ENCODE measurements at regions of chr3 and their contacts with region 1.

Region 1: DNA sequence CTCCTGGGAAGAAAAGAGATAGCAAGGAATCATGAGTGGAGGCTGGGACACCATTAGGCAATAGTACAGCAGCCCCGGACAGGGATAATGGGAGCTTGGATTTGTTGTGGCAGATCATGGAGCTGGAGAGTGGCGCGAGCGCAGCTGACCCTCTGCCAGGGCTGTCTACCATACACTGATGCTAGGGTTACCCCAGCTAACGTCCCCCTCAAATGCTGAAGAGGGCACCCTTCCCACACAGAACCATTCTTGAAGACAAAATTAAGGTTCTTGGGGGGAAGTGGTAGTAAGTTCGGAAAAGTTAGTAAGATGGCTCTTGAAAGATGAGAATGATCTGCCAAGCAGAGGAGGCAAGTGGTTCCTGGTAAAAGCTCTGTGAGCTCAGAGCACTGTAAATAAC is 61.1 kb downstream of the ST3GAL6 start:
- DNase-seq: no peak
- ATAC-seq: peak in 1 of 8 donors; percentile 45
- H3K4me3 ChIP-seq: no peak overlapping the region
- H3K27ac ChIP-seq: no peak overlapping the region
- H3K4me1 ChIP-seq: peaks cover 0 to 25% (median 0%) of the 10 kb centered on the region in 9 donors
- H3K27me3 ChIP-seq: no peaks in the 10 kb centered on the region
- CTCF ChIP-seq: peak in 2 of 9 donors; percentile 8 to 10

Region 2: GRCh38 chr3:98333989-98334606 is 490.2 kb before region 1 on chr3:
- intact Hi-C with region 1: no loop called
- DNase-seq: no peak
- ATAC-seq: no peak
- H3K4me3 ChIP-seq: no peak overlapping the region
- H3K27ac ChIP-seq: no peak overlapping the region
- H3K4me1 ChIP-seq: no peaks in the 10 kb centered on the region
- H3K27me3 ChIP-seq: peaks cover 0 to 17% (median 3%) of the 10 kb centered on the region in 7 donors
- CTCF ChIP-seq: no peak

Region 3: DNA sequence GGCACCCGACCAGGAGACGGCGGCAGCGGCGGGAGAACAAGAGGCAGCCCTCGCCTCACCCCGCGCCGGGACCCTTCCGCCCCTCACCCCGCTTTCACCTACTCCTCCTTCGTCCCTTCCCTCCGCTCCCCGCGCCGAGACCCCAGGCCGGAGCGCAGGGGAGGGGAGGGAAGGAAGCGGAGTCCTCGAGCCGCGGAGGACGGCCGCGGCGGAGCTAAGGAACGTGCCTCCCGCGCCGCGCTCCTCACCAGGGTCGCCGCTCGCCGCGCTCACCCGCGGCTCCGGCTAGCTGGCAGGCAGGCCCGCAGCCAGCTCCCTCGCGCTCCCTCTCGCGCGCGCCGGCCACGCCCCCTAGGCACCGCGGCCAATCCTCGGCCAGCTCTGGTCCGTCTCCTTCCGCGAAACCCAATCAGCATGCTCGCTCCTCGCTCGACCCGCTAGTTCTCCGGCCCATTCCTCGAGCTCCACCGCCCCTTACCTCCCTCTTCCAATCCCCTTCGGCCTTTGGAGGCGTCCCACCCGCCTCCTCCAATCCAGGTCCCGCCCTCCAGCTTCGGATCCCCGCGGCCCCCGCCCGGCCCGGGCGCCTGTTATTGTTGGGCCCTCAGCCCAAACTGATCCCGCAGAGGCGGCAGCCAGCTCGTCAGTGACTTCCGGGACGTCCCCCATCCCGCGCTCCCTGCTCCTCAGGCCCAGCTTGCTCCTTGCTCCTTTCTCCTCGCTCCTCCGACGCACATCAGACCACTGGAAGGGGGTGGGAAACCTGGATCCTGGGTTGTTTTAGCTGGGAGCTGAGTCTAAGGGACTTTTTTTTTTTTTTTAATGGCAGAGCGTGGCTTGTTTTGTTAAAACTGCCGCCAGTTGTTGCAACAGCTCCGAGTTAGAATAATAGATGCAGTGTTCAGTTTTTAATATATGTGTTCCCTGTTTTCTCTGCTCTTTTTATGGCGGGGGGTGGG is 77.4 kb after region 1 on chr3 and contains the start of gene DCBLD2:
- intact Hi-C with region 1: loop called in 2 of 10 experiments (anchors 5 to 10 kb)
- DNase-seq: peak; percentile 97 to 99
- ATAC-seq: peak; percentile 98 to 99 (median 99)
- H3K4me3 ChIP-seq: peak within 1 kb of the TSS; percentile 71 to 98 (median 90)
- H3K27ac ChIP-seq: peak within 1 kb of the TSS; percentile 82 to 96 (median 94)
- H3K4me1 ChIP-seq: peaks cover 0 to 47% (median 22%) of the 10 kb centered on the region in 9 donors
- H3K27me3 ChIP-seq: peaks cover 0 to 9% (median 0%) of the 10 kb centered on the region in 7 donors
- CTCF ChIP-seq: no peak
- total RNA-seq, gene DCBLD2: 24.6 to 97.4 (median 48.4) TPM

Region 4: GRCh38 chr3:98994128-98994762 is 170.0 kb after region 1 on chr3:
- intact Hi-C with region 1: loop called in 5 of 10 experiments (anchors 2 to 5 kb)
- DNase-seq: no peak
- ATAC-seq: peak in 2 of 8 donors; percentile 42
- H3K4me3 ChIP-seq: no peak overlapping the region
- H3K27ac ChIP-seq: no peak overlapping the region
- H3K4me1 ChIP-seq: no peaks in the 10 kb centered on the region
- H3K27me3 ChIP-seq: no peaks in the 10 kb centered on the region
- CTCF ChIP-seq: peak; percentile 48 to 81 (median 70)

Region 5: GRCh38 chr3:99172736-99173657 is 348.7 kb after region 1 on chr3:
- intact Hi-C with region 1: loop called in 2 of 10 experiments (anchors 10 kb)
- DNase-seq: peak in 1 of 2 donors; percentile 23
- ATAC-seq: peak in 4 of 8 donors; percentile 25 to 58 (median 40)
- H3K4me3 ChIP-seq: no peak overlapping the region
- H3K27ac ChIP-seq: no peak overlapping the region
- H3K4me1 ChIP-seq: no peaks in the 10 kb centered on the region
- H3K27me3 ChIP-seq: no peaks in the 10 kb centered on the region
- CTCF ChIP-seq: peak; percentile 12 to 71 (median 62)